WTC11 (cell line): ENCODE measurements at regions of chr10 and their contacts with region 1.

Region 1: DNA sequence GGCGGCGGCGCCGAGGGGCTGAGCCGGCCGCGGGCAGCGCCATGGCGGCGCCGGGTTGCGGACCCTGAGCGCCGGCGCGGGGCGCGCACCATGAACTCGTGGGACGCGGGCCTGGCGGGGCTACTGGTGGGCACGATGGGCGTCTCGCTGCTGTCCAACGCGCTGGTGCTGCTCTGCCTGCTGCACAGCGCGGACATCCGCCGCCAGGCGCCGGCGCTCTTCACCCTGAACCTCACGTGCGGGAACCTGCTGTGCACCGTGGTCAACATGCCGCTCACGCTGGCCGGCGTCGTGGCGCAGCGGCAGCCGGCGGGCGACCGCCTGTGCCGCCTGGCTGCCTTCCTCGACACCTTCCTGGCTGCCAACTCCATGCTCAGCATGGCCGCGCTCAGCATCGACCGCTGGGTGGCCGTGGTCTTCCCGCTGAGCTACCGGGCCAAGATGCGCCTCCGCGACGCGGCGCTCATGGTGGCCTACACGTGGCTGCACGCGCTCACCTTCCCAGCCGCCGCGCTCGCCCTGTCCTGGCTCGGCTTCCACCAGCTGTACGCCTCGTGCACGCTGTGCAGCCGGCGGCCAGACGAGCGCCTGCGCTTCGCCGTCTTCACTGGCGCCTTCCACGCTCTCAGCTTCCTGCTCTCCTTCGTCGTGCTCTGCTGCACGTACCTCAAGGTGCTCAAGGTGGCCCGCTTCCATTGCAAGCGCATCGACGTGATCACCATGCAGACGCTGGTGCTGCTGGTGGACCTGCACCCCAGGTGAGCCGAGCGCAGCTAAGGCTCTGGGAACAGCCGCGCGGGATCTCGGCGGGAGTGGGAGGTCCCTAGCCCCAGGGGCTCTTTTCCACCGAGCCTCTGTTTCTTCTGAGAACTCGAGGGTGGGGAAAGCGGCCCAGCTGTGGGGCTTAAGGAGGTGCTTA is at the start of gene GPR26:
- DNase-seq: peak; percentile 63
- ATAC-seq: peak; percentile 66
- H3K4me3 Mint-ChIP-seq: peak within 1 kb of the TSS; percentile 72
- H3K27ac Mint-ChIP-seq: no peak within 1 kb of the TSS
- H3K4me1 Mint-ChIP-seq: peaks cover 16% of the 10 kb centered on the region
- H3K27me3 Mint-ChIP-seq: peaks cover 58% of the 10 kb centered on the region
- CTCF ChIP-seq: no peak
- total RNA-seq, gene GPR26: 0.05 to 0.07 TPM (median 0.07 TPM) in 3 replicates

Region 2: DNA sequence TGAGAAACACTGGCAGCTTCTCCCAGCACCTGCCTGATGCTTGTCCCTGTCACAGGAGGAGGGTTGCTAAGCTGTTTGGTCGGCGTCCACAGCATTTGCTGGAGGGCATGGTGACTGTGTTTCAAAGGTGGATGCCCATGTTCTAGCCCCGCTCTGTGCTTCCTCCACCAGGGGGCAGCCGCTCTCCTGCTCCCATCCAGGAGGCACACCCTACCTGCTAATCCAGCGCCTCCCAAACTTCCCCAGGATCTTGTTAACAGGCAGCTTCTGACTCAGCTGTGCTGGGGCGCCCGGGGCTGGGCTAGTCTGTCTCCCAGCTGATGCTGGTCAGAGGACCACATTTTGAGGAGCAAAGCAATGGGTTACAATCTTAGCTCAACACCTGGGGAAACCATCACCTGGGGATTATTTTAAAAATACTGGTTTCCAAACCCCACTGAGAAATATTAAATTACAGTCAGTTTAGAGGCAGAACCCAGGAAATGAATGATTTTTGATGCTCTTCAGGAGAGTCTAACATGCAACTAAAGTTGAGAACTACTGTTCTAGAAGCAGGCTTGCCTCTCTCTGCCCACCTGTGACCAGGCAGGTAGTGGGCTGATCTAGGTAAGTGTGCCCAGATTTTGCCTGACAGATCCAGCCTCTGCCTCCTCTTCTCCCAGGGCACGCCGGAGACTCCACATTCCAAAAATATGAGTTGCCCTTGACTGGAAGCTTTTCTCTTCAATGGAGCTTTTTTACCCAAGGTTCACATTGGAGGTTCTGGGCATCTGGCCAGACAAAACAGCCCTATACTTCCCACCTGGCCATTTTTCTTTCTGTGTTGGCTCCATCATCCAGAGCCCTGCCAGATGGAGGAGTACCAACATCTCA is 93.1 kb before region 1 on chr10:
- CTCF ChIA-PET with region 1: interaction called, 42 read pairs
- POLR2A ChIA-PET with region 1: no interaction called
- DNase-seq: peak; percentile 92
- ATAC-seq: peak; percentile 98
- H3K4me3 Mint-ChIP-seq: no peak overlapping the region
- H3K27ac Mint-ChIP-seq: no peak overlapping the region
- H3K4me1 Mint-ChIP-seq: peaks cover 20% of the 10 kb centered on the region
- H3K27me3 Mint-ChIP-seq: peaks cover 2% of the 10 kb centered on the region
- CTCF ChIP-seq: peak; percentile 63

Region 3: DNA sequence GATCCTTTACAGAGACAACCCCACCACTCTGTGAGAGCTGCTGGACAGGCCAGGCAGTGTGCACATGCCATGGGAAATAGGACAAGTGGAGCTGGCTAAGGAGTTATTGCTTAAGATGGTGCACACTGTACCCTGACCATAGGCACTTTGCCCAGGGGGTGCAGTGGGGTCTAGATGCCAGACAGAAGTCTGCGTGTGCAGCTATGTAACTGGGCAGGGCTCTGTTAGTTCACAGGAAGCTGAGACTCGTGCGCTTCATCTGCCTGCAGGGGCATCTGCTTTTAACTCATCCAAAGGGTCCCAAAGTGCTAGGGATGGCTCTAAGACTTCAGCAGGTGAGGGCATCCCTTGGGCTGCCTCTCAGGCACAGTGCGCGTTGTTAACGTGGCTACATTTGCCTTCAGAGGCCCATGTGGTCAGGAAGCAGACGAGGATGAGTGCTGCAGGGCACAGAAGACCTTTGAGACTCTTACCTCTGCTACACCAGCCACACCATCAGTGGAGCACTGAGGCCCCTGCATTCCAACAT is 78.1 kb before region 1 on chr10:
- CTCF ChIA-PET with region 1: interaction called, 105 read pairs
- POLR2A ChIA-PET with region 1: no interaction called
- DNase-seq: no peak
- ATAC-seq: no peak
- H3K4me3 Mint-ChIP-seq: no peak overlapping the region
- H3K27ac Mint-ChIP-seq: no peak overlapping the region
- H3K4me1 Mint-ChIP-seq: peaks cover 29% of the 10 kb centered on the region
- H3K27me3 Mint-ChIP-seq: peaks cover 2% of the 10 kb centered on the region; the same call in 1 of the 2 replicates
- CTCF ChIP-seq: no peak

Region 4: GRCh38 chr10:123642293-123642692 is 24.3 kb before region 1 on chr10:
- CTCF ChIA-PET with region 1: interaction called, 25 read pairs
- POLR2A ChIA-PET with region 1: no interaction called
- DNase-seq: no peak
- ATAC-seq: peak; percentile 35
- H3K4me3 Mint-ChIP-seq: no peak overlapping the region
- H3K27ac Mint-ChIP-seq: no peak overlapping the region
- H3K4me1 Mint-ChIP-seq: peaks cover 45% of the 10 kb centered on the region
- H3K27me3 Mint-ChIP-seq: no peaks in the 10 kb centered on the region
- CTCF ChIP-seq: no peak

Region 5: DNA sequence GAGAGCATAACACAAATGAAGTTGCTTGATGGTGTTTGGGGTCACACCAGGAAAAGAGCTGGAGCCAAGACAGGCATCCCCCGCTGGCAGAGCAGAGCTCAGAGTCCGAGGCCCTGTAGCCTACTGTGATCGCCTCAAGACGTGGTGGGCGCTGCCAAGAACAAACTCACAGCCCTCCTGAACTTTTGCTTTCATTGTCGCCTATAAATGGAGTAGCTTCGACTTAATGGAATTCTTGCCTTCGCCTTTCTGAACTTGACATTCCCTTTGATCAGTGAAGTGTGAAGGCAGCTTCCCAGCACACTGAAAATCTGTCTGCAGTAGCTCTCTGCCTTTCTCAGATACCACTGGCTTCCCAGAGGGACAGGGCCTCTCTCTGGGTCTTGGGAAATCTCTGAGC is 203.7 kb after region 1 on chr10:
- CTCF ChIA-PET with region 1: no interaction called
- POLR2A ChIA-PET with region 1: no interaction called
- DNase-seq: no peak
- ATAC-seq: no peak
- H3K4me3 Mint-ChIP-seq: no peak overlapping the region
- H3K27ac Mint-ChIP-seq: no peak overlapping the region
- H3K4me1 Mint-ChIP-seq: peaks cover 34% of the 10 kb centered on the region
- H3K27me3 Mint-ChIP-seq: no peaks in the 10 kb centered on the region; the same call in 1 of the 2 replicates
- CTCF ChIP-seq: no peak

Region 6: GRCh38 chr10:123974406-123974805 is 307.8 kb after region 1 on chr10:
- CTCF ChIA-PET with region 1: interaction called, 11 read pairs
- POLR2A ChIA-PET with region 1: no interaction called
- DNase-seq: no peak
- ATAC-seq: no peak
- H3K4me3 Mint-ChIP-seq: peak overlapping the region; percentile 12; the same call in 1 of the 2 replicates
- H3K27ac Mint-ChIP-seq: no peak overlapping the region
- H3K4me1 Mint-ChIP-seq: peaks cover 37% of the 10 kb centered on the region
- H3K27me3 Mint-ChIP-seq: peaks cover 41% of the 10 kb centered on the region
- CTCF ChIP-seq: no peak